ENCODE measurements at regions of chr12 and their contacts with region 1.

Region 1: DNA sequence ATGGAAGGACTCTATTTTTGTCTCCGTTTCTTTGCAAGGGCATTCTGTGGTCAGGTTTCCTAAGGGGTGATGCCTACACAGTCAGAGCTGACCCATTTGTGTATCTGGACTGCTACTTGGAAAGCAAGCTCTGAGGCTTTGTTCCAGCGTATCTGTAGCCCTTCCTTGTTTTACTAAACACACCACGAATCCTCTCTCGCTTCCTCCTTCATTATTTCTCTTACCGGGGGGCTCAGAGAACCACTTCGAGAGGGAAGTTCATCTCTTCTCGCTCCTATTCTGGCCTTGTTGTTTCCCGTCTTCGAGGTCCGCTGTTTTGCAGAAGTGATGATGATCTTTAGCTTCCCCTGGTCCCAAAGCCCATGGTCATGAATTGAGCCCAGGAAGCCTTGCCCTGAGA is 164.7 kb downstream of the SSPN start:
- DNase-seq: no peak
- ATAC-seq: no peak
- H3K4me3 ChIP-seq: no peak overlapping the region
- H3K27ac ChIP-seq: no peak overlapping the region
- H3K4me1 ChIP-seq: no peaks in the 10 kb centered on the region
- H3K27me3 ChIP-seq: no peaks in the 10 kb centered on the region
- CTCF ChIP-seq: no peak
- EP300 ChIP-seq: no peak
- POLR2A ChIP-seq: no peak
- RAD21 ChIP-seq: no peak

Region 2: GRCh38 chr12:26346700-26347099 is 13.4 kb before region 1 on chr12:
- CTCF ChIA-PET with region 1: interaction called, 3 read pairs
- POLR2A ChIA-PET with region 1: no interaction called
- RAD21 ChIA-PET with region 1: interaction called, 4 read pairs
- SMC1A ChIA-PET with region 1: interaction called, 12 read pairs
- in situ Hi-C with region 1: no loop called
- intact Hi-C with region 1: no loop called
- DNase-seq: no peak
- ATAC-seq: no peak
- H3K4me3 ChIP-seq: no peak overlapping the region
- H3K27ac ChIP-seq: no peak overlapping the region
- H3K4me1 ChIP-seq: peaks cover 3% of the 10 kb centered on the region
- H3K27me3 ChIP-seq: no peaks in the 10 kb centered on the region
- CTCF ChIP-seq: no peak
- EP300 ChIP-seq: no peak
- POLR2A ChIP-seq: no peak
- RAD21 ChIP-seq: no peak